ENCODE measurements at regions of chr16 and their contacts with region 1.

Region 1: GRCh38 chr16:58392215-58393137 is at the start of gene GINS3:
- DNase-seq: peak; percentile 67 to 83 (median 81)
- ATAC-seq: peak; percentile 96
- H3K4me3 ChIP-seq: peak within 1 kb of the TSS; percentile 99
- H3K4me3 Mint-ChIP-seq: peak within 1 kb of the TSS; percentile 91 to 100 (median 98)
- H3K27ac ChIP-seq: peak within 1 kb of the TSS; percentile 80
- H3K27ac Mint-ChIP-seq: peak within 1 kb of the TSS; percentile 89 to 99 (median 95)
- H3K4me1 ChIP-seq: peaks cover 5 to 6% of the 10 kb centered on the region in 2 donors
- H3K4me1 Mint-ChIP-seq: peaks cover 3 to 28% (median 16%) of the 10 kb centered on the region in 7 donors
- H3K27me3 ChIP-seq: no peaks in the 10 kb centered on the region
- H3K27me3 Mint-ChIP-seq: peaks cover 0 to 21% (median 0%) of the 10 kb centered on the region in 5 donors
- total RNA-seq, gene GINS3: 0.66 to 13.3 (median 1.4) TPM

Region 2: GRCh38 chr16:58249780-58250478 is 142.5 kb before region 1 on chr16:
- CTCF ChIA-PET with region 1: no interaction called
- POLR2A ChIA-PET with region 1: interaction called, 3 read pairs
- intact Hi-C with region 1: loop called (anchors 1 to 2 kb)
- DNase-seq: peak; percentile 74 to 91 (median 86)
- ATAC-seq: peak; percentile 98
- H3K4me3 ChIP-seq: peak overlapping the region; percentile 77
- H3K4me3 Mint-ChIP-seq: peak overlapping the region; percentile 77 to 87 (median 82)
- H3K27ac ChIP-seq: peak overlapping the region; percentile 43
- H3K27ac Mint-ChIP-seq: peak overlapping the region in 8 of 9 donors; percentile 31 to 86 (median 67)
- H3K4me1 ChIP-seq: peaks cover 5 to 7% of the 10 kb centered on the region in 2 donors
- H3K4me1 Mint-ChIP-seq: peaks cover 6 to 13% (median 12%) of the 10 kb centered on the region in 7 donors
- H3K27me3 ChIP-seq: no peaks in the 10 kb centered on the region
- H3K27me3 Mint-ChIP-seq: peaks cover 0 to 17% (median under 1%) of the 10 kb centered on the region in 5 donors

Region 3: DNA sequence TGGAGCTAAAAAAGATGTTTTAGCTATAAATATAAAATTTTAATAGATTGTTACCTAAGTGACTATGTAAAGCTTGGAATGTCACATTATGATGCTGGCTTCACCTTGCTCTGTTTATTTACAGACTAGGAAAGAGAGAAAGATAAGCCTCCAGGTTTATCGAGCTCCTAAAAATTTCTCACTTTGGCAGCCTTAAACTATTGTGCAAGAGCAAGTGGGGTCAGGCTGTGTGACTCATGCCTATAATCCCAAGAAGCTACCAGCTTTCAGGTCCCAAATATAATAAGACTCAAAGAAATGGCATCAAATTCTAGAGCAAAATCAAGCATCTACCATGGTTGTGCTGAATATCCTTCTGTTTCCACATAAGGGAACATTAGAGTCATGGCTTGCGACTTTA is 63.3 kb before region 1 on chr16:
- CTCF ChIA-PET with region 1: no interaction called
- POLR2A ChIA-PET with region 1: no interaction called
- intact Hi-C with region 1: no loop called
- DNase-seq: no peak
- ATAC-seq: no peak
- H3K4me3 ChIP-seq: no peak overlapping the region
- H3K4me3 Mint-ChIP-seq: no peak overlapping the region
- H3K27ac ChIP-seq: no peak overlapping the region
- H3K27ac Mint-ChIP-seq: no peak overlapping the region
- H3K4me1 ChIP-seq: no peaks in the 10 kb centered on the region
- H3K4me1 Mint-ChIP-seq: no peaks in the 10 kb centered on the region
- H3K27me3 ChIP-seq: peaks cover 0 to 2% of the 10 kb centered on the region in 2 donors
- H3K27me3 Mint-ChIP-seq: peaks cover 18 to 34% (median 24%) of the 10 kb centered on the region in 5 donors

Region 4: DNA sequence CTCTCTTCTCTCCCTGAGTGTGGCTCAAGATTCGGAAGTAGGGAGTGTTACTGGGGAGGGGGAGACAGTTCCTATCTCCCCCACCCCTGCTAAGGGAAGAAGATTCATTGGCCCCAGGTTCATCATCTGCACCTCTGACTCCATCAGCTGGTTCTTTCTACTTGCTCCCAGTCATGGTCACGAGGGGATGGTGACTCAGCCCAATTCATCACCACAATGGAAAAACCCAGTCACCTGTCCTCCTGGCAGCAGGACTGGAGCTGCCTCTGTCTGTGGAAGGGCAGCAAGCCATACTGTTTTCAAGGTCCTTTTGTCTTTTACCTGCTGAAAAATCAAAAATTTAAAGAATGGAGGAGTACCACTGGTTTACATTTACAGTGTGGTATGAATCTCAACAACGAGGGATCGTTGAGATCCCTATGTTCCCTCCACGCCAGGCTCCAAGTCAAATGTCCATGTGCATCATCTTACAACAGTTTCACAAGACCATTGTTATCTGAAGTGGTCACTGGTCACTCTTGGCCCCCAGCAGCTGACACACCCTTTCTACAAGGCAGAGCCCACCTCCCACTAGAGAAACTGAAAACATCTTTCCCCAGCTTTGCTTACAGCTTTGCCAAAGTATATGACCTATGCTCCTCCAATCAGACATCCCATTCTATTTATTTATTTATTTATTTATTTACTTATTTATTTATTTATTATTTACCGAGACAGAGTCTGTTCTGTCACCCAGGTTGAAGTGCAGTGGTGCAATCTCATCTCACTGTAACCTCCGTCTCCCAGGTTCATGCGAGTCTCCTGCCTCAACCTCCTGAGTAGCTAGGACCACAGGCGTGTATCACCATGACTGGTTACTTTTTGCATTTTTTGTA is 67.1 kb after region 1 on chr16:
- CTCF ChIA-PET with region 1: no interaction called
- POLR2A ChIA-PET with region 1: no interaction called
- intact Hi-C with region 1: loop called in 1 of 2 experiments (anchors 5 kb)
- DNase-seq: peak in 1 of 9 donors; percentile 69
- ATAC-seq: peak; percentile 26
- H3K4me3 ChIP-seq: no peak overlapping the region
- H3K4me3 Mint-ChIP-seq: peak overlapping the region in 1 of 10 donors; percentile 26
- H3K27ac ChIP-seq: no peak overlapping the region
- H3K27ac Mint-ChIP-seq: no peak overlapping the region
- H3K4me1 ChIP-seq: no peaks in the 10 kb centered on the region
- H3K4me1 Mint-ChIP-seq: peaks cover 0 to 8% (median under 1%) of the 10 kb centered on the region in 7 donors
- H3K27me3 ChIP-seq: no peaks in the 10 kb centered on the region
- H3K27me3 Mint-ChIP-seq: peaks cover 20 to 41% (median 28%) of the 10 kb centered on the region in 5 donors

Region 5: GRCh38 chr16:58515125-58515870 is 122.8 kb after region 1 on chr16 and contains the start of gene SETD6:
- CTCF ChIA-PET with region 1: no interaction called
- POLR2A ChIA-PET with region 1: interaction called, 3 read pairs
- intact Hi-C with region 1: loop called in 1 of 2 experiments (anchors 1 kb)
- DNase-seq: peak; percentile 49 to 89 (median 61)
- ATAC-seq: peak; percentile 85
- H3K4me3 ChIP-seq: peak within 1 kb of the TSS; percentile 82
- H3K4me3 Mint-ChIP-seq: peak within 1 kb of the TSS; percentile 78 to 95 (median 88)
- H3K27ac ChIP-seq: peak within 1 kb of the TSS; percentile 81
- H3K27ac Mint-ChIP-seq: peak within 1 kb of the TSS; percentile 69 to 95 (median 87)
- H3K4me1 ChIP-seq: peaks cover 7 to 10% of the 10 kb centered on the region in 2 donors
- H3K4me1 Mint-ChIP-seq: peaks cover 9 to 40% (median 26%) of the 10 kb centered on the region in 7 donors
- H3K27me3 ChIP-seq: no peaks in the 10 kb centered on the region
- H3K27me3 Mint-ChIP-seq: no peaks in the 10 kb centered on the region
- total RNA-seq, gene SETD6: 20.7 to 41.3 (median 39.0) TPM

Region 6: DNA sequence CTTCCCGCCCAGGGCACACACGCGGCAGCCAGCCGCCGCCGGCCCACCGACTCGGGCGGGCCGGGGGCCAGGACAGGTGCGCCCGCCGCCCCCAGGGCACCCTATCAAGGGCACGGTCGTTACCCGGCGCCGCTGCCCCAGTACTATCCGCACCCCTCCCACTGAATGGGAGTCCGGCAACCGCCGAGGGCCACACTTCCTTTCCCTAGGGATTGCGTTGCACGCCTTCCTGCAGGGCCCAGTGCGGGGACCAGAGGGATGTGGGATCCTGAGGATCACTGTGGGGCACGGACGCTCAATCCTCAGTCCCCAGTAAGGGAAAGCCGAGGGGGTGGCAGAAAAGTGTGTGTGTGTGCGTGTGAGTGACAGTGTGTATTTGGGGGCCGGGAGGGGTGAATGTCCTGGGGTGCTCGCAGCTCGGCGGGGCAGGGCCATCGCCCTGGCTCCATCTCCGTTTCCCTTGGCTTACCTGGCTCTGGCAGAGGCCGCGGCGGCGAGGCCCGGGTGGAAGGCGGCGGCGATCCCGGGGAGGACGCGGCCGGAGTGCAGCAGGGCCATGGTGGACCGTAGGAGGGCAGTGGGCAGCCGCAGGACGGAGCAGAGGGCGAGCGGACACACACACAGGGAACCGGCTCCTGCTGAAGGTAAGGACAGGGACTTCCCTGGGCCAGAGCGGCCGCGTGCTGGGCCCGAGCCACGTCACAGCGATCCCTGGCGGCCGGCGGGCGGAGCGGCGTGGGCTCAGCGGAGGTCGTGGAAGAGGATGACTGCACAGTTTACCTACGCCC is 341.4 kb after region 1 on chr16 and contains the start of gene GOT2:
- CTCF ChIA-PET with region 1: no interaction called
- POLR2A ChIA-PET with region 1: no interaction called
- intact Hi-C with region 1: loop called (anchors 1 to 5 kb)
- DNase-seq: peak; percentile 61 to 87 (median 77)
- ATAC-seq: peak; percentile 99
- H3K4me3 ChIP-seq: peak within 1 kb of the TSS; percentile 83
- H3K4me3 Mint-ChIP-seq: peak within 1 kb of the TSS; percentile 93 to 99 (median 98)
- H3K27ac ChIP-seq: peak within 1 kb of the TSS; percentile 79
- H3K27ac Mint-ChIP-seq: peak within 1 kb of the TSS; percentile 31 to 95 (median 91)
- H3K4me1 ChIP-seq: peaks cover 9 to 15% of the 10 kb centered on the region in 2 donors
- H3K4me1 Mint-ChIP-seq: peaks cover 16 to 50% (median 42%) of the 10 kb centered on the region in 7 donors
- H3K27me3 ChIP-seq: no peaks in the 10 kb centered on the region
- H3K27me3 Mint-ChIP-seq: peaks cover 0 to 3% (median 0%) of the 10 kb centered on the region in 5 donors
- total RNA-seq, gene GOT2: 24.3 to 76.6 (median 38.0) TPM